ENCODE measurements at regions of chrX and their contacts with region 1.

Region 1: DNA sequence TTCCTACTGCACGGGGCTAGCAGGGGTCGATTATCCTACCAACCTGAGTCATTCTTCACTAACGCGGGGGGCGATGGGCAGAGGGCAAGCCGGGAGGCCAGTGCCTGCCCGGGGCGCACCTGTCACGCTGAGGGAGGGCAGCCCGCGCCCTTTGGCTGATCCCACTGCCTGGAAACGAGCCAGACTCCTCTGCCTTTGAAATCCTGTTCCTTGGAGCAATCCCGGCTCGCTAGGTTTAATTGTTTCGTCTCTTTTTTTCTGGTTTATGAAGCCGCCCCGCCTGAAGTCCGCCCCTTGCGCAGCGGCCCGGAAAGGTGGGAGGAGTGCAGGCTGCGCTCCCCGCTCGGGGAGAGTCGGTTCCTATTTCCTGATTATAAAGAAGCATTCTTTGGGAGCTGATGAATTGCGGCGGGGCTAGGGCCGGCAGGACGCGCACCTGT is 484.3 kb downstream of the BCOR start:
- DNase-seq: peak; percentile 63
- H3K4me3 Mint-ChIP-seq: peak overlapping the region; percentile 90
- H3K27ac Mint-ChIP-seq: peak overlapping the region; percentile 98
- H3K4me1 Mint-ChIP-seq: peaks cover 26% of the 10 kb centered on the region
- H3K27me3 Mint-ChIP-seq: no peaks in the 10 kb centered on the region

Region 2: DNA sequence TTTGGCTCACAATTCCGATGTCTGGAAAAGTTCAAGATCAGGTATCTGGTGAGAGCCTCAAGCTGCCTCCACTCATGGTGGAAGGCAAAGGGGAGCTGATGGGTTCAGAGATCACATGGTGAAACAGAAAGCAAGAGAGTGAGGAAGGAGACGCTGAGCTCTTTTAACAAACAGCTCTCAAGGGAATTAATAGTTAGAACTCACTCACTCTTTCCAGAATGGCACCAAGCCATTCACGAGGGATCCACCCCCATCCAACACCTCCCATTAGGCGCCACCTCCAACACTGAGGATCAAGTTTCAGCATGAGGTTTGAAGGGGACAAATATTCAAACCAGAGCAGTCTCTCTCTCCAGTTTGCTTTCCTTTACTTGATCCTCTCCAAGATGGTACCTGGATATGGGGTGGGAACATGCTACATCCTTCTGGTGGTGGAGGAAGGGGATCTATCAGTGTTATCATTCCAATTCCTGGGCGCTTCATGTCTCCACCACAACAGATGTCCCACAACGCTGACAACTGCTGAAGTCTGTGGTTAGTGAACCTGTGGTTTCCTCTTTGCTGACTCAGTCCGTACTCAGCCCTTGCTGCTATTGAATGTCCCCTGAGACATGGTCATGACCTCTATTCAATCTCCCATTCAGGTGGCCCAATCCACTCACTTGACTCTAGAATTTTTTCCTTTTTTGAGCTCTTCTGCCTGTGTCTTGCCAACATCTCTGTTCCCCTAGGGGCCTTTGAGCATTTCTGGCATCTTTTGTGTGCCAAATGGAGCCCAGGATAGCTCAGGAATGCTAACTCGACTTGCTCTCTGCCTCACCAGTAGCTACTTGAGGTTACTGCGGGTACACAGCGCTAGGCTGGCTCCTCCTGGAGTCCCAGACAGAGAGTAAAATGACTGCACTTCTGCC is 417.1 kb before region 1 on chrX:
- intact Hi-C with region 1: loop called (anchors 5 kb)
- DNase-seq: peak; percentile 85
- H3K4me3 Mint-ChIP-seq: peak overlapping the region; percentile 47
- H3K27ac Mint-ChIP-seq: peak overlapping the region; percentile 91
- H3K4me1 Mint-ChIP-seq: peaks cover 47% of the 10 kb centered on the region
- H3K27me3 Mint-ChIP-seq: no peaks in the 10 kb centered on the region

Region 3: DNA sequence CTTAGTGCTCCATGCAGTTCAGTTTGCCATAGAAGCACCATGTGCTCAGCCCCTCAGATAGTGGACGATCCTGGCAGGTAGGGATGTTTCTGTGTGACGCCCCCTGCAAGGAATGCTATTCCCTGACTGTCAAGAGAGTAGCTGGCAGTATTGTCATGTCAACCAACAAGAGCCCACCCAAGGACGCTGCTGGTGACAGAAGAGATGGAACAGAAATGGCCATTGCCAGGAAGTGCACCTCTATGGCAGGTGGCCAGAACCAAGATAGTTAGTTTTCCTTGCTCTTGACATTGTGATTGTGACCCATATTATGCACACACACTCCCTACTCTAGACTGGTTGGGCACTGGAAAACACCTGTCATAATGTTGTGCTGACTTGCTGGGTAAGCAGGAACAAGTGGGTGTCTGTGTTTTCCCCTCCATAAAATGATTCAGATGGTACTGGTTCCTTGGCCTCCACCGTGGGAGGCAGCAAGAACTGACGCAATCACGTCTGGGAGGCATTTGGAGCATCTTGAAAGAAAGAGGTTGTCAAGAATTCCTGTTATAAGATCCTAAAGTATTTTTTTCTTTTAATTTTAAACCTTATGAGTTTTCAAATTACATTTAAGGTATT is 304.4 kb before region 1 on chrX:
- intact Hi-C with region 1: loop called (anchors 1 kb)
- DNase-seq: peak; percentile 74
- H3K4me3 Mint-ChIP-seq: peak overlapping the region; percentile 54
- H3K27ac Mint-ChIP-seq: peak overlapping the region; percentile 100
- H3K4me1 Mint-ChIP-seq: peaks cover 50% of the 10 kb centered on the region
- H3K27me3 Mint-ChIP-seq: no peaks in the 10 kb centered on the region

Region 4: GRCh38 chrX:39601231-39602177 is 12.0 kb before region 1 on chrX:
- intact Hi-C with region 1: no loop called
- DNase-seq: no peak
- H3K4me3 Mint-ChIP-seq: no peak overlapping the region
- H3K27ac Mint-ChIP-seq: no peak overlapping the region
- H3K4me1 Mint-ChIP-seq: peaks cover 4% of the 10 kb centered on the region
- H3K27me3 Mint-ChIP-seq: peaks cover 2% of the 10 kb centered on the region

Region 5: DNA sequence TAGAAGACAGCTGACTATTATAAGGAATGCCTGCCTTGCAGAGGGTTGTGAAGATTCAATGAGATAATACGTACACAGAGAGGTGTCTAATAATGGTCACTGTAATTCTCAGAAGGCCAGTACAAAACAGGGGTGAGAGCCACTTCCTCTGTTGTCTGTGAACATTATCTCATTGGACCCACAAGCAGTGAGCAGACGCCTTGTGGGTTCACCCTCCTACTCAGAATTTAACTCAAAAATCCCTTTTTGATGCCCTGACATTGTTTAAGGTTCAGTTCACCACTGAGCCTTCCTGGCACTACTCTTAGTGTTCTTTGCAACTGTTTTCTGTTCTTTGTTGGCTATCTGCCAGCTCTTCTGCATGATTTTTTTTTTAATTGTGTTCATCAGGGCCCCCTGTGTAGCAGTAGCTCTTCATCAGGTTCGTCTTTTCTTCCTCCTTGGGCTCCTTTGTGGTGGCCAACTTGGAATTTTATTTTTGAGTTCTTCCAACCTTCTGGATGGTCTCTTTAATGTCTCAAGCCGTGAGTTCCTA is 16.9 kb after region 1 on chrX:
- intact Hi-C with region 1: loop called (anchors 2 kb)
- DNase-seq: no peak
- H3K4me3 Mint-ChIP-seq: peak overlapping the region; percentile 65
- H3K27ac Mint-ChIP-seq: peak overlapping the region; percentile 76
- H3K4me1 Mint-ChIP-seq: peaks cover 23% of the 10 kb centered on the region
- H3K27me3 Mint-ChIP-seq: no peaks in the 10 kb centered on the region

Region 6: GRCh38 chrX:39796856-39797255 is 183.4 kb after region 1 on chrX:
- intact Hi-C with region 1: no loop called
- DNase-seq: no peak
- H3K4me3 Mint-ChIP-seq: no peak overlapping the region
- H3K27ac Mint-ChIP-seq: no peak overlapping the region
- H3K4me1 Mint-ChIP-seq: no peaks in the 10 kb centered on the region
- H3K27me3 Mint-ChIP-seq: no peaks in the 10 kb centered on the region

Region 7: DNA sequence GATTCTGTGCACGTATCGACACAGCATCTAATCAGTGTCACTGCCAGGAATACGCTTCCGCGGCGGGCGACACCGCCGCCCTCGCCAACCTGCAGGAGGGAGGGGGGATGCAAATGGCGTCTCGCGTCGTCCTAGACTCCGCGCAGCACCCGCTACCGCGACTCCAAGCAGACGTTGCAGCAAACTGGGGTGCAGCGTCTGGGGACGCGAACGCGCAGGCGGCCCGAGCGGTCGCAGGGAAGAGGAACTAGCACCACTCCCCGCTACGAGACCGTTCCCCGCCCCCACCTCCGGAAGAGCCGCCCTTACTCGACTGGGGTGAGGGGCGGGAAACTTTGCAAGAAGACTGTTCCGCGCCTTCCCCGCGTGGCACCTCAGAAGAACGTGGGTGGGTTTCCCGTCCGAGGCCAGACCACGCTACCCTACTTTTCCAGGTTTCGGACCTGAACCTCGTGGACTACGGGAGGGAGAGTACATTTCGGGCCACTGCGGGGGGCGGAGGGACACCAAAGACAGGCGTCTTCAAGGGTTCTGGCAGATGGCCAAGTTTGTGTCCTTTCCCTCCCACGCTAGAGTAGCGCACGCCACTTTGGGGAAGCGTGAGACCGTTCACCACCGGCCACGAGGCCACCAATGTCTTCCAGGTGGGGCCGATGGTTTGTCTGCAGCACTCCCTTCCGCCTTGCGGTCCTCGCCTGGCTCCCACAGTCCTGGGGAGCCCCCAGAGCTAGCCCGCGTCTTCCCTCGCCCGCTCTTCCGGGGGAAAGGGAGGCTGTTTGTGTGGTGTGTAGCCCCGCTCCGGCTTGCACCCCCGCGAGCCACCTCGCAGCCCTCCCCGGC is 562.2 kb after region 1 on chrX:
- intact Hi-C with region 1: loop called (anchors 1 kb)
- DNase-seq: peak; percentile 92
- H3K4me3 Mint-ChIP-seq: peak overlapping the region; percentile 93
- H3K27ac Mint-ChIP-seq: peak overlapping the region; percentile 99
- H3K4me1 Mint-ChIP-seq: peaks cover 25% of the 10 kb centered on the region
- H3K27me3 Mint-ChIP-seq: no peaks in the 10 kb centered on the region